T-cell (primary cell): ENCODE measurements at regions of chr1 and their contacts with region 1.

Region 1: GRCh38 chr1:29202584-29203340 is 21.1 kb upstream of the SRSF4 start:
- DNase-seq: peak; percentile 55 to 91 (median 81)
- ATAC-seq: peak; percentile 88 to 93 (median 93)
- H3K4me3 ChIP-seq: no peak overlapping the region
- H3K4me3 Mint-ChIP-seq: no peak overlapping the region
- H3K27ac ChIP-seq: no peak overlapping the region
- H3K27ac Mint-ChIP-seq: no peak overlapping the region
- H3K4me1 ChIP-seq: no peaks in the 10 kb centered on the region
- H3K4me1 Mint-ChIP-seq: peaks cover 0 to 3% (median 0%) of the 10 kb centered on the region in 3 donors
- H3K27me3 ChIP-seq: no peaks in the 10 kb centered on the region
- H3K27me3 Mint-ChIP-seq: no peaks in the 10 kb centered on the region

Region 2: DNA sequence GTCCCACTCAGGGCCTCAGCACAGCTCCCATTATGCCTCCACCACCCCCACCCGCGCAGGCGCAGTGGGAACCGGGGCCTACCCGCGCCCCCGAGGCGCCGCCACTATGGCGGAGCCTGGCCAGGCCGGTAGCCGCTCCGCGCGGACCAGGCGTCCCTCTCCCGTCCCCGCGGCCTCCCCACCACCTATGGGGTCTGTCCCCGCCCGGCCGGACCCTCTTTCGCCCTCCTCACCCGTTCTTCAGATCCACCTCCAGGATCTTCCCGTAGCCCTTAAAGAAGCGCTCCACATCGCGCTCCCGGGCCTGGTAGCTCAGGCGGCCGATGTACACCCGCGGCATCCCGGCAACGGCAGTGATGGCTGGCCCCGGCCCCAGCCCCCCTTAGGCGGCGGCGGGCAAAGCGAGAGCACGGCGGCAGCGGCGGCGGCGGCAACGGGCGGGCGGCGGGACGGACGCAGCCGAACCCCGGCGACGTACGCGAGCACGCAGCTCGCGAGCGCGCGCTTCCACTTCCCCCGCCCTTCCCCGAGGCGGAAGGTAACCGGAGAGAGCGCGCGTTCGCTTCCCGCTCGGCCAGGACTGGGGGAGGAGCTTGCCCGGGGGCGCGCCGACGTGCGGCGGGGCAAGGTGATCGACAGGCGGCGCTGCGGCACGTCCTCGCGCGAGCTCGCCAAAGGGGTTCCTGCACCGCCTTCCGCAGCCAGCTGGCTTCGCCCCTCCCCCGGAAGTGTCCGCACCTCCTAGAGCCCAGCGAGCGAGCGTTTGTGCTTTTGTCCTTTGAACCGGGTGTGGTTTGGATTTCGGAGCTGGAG is 21.1 kb before region 1 on chr1 and contains the start of gene SRSF4:
- CTCF ChIA-PET with region 1: interaction called, 3 to 35 read pairs
- POLR2A ChIA-PET with region 1: interaction called in 1 of 2 experiments, 4 read pairs
- DNase-seq: peak; percentile 96 to 99 (median 98)
- ATAC-seq: peak; percentile 89 to 97 (median 92)
- H3K4me3 ChIP-seq: peak within 1 kb of the TSS; percentile 89 to 98
- H3K4me3 Mint-ChIP-seq: peak within 1 kb of the TSS; percentile 89 to 95 (median 92)
- H3K27ac ChIP-seq: peak within 1 kb of the TSS; percentile 99
- H3K27ac Mint-ChIP-seq: peak within 1 kb of the TSS; percentile 92 to 96
- H3K4me1 ChIP-seq: peaks cover 30 to 33% of the 10 kb centered on the region in 2 experiments
- H3K4me1 Mint-ChIP-seq: peaks cover 51 to 57% (median 51%) of the 10 kb centered on the region in 3 donors
- H3K27me3 ChIP-seq: no peaks in the 10 kb centered on the region
- H3K27me3 Mint-ChIP-seq: no peaks in the 10 kb centered on the region
- total RNA-seq, gene SRSF4: 76.0 to 90.4 (median 78.9) TPM

Region 3: DNA sequence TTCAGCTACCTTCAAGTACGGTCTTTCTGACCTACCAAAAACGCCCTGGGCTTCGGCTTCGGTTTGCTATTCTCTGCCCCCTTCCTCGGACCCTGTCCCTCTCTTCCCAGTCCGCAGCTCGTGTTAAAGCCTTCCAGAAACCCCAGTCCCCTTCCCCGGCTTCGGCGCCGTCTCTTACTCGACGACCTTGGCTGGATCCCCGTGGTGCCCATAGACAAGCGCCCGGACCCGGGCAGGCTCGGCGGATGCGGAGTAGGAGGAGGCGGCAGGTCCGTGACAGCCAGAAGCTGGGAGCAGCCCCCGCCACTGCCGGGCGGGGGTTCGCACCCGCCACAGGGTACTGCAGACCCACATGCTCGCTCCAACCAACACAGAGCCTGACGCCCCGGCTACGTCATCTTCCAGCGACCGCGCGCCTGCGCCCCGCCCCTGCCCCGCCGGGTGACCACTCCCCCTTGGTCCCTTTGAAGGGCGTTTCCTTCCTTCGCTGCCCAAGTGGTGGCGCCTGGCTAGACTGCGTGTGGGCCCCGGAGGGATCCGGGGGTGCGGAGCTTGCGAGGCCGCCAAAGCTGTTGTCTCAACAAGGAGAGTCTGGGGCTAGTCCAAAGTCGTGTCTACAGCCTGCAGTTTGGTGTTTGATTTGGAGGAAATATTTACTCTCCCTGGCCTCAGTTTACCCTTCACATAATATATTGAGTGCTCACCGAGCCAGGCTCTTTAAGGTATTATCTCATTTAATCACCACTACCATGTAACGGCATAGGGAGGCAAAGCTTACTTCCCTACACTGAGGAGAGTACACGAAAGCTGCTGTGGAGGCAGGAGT is 28.0 kb after region 1 on chr1 and contains the start of gene MECR:
- CTCF ChIA-PET with region 1: no interaction called
- POLR2A ChIA-PET with region 1: no interaction called
- DNase-seq: peak; percentile 84 to 96 (median 91)
- ATAC-seq: peak; percentile 95 to 98 (median 98)
- H3K4me3 ChIP-seq: peak within 1 kb of the TSS; percentile 77 to 80
- H3K4me3 Mint-ChIP-seq: peak within 1 kb of the TSS; percentile 90 to 99 (median 92)
- H3K27ac ChIP-seq: peak within 1 kb of the TSS; percentile 32
- H3K27ac Mint-ChIP-seq: peak within 1 kb of the TSS; percentile 89 to 93
- H3K4me1 ChIP-seq: peaks cover 5 to 8% of the 10 kb centered on the region in 2 experiments
- H3K4me1 Mint-ChIP-seq: peaks cover 21 to 22% (median 22%) of the 10 kb centered on the region in 3 donors
- H3K27me3 ChIP-seq: peaks cover 0 to 6% of the 10 kb centered on the region in 2 experiments
- H3K27me3 Mint-ChIP-seq: peaks cover 10 to 15% of the 10 kb centered on the region in 2 donors
- total RNA-seq, gene MECR: 9.5 to 17.8 (median 17.3) TPM

Region 4: DNA sequence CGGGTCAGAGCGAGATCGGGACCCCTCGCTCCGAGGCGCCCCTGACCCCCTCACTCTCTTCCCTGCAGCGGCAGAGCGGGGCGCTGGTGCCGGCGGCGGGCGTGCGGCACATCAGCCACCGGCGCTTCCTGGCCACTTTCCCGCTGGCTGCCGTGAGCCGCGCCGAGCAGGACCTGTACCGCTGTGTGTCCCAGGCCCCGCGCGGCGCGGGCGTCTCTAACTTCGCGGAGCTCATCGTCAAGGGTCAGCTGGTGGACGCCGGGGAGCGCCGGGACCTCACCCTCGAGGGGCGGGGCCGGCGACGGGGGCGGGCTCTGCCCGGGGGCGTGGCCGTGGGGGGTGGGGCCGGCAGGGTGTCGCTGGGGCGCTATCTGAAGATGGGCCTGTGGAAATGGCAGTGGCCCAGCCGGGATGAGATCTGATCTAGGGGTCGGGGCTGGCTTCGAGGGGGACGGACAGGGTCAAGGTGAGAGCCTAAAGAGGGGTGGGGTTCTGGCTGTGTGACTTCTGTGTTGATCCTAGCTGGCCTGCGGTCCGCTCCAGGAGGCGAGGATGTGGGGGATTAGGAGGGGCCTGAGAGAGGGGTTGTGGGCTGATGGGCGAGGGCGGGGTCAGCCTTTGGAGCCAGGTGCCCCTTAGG is 57.2 kb after region 1 on chr1:
- CTCF ChIA-PET with region 1: no interaction called
- POLR2A ChIA-PET with region 1: no interaction called
- DNase-seq: peak in 12 of 35 experiments; percentile 8 to 45 (median 20)
- ATAC-seq: peak; percentile 65 to 73 (median 70)
- H3K4me3 ChIP-seq: peak overlapping the region; percentile 32 to 52
- H3K4me3 Mint-ChIP-seq: peak overlapping the region; percentile 71 to 79 (median 73)
- H3K27ac ChIP-seq: no peak overlapping the region
- H3K27ac Mint-ChIP-seq: no peak overlapping the region
- H3K4me1 ChIP-seq: peaks cover 0 to 16% of the 10 kb centered on the region in 2 experiments
- H3K4me1 Mint-ChIP-seq: peaks cover 5 to 11% (median 6%) of the 10 kb centered on the region in 3 donors
- H3K27me3 ChIP-seq: peaks cover 3 to 59% of the 10 kb centered on the region in 2 experiments
- H3K27me3 Mint-ChIP-seq: peaks cover 32 to 53% of the 10 kb centered on the region in 2 donors

Region 5: DNA sequence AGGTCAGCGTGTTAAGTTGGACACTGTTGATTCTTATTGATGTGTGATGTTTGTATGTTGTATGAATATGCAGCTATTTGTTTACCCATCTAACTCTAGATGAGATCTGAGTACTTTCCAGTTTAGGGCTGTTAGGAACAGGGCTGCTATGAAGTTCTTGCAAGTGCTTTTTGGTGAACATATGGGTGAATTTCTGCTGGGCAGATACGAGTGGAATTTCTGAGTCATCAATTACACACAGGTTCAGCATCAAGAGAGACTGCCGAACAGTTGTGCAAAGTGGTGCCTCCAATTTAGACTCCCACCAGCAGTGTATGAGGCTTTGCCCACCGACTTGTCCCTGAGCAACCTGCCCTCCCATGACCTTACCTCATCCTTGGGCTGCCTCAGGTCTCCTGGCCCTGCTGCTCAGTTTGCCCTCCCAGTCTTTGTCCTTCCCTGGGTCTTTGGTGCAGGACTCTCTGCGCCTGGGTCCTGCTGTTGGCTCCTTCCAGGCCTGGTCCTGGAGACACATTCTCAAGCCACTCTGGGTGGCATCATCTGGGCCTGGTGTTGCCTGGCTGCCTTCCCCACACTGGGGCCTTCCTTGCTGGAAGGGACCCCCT is 377.2 kb after region 1 on chr1:
- CTCF ChIA-PET with region 1: no interaction called
- POLR2A ChIA-PET with region 1: no interaction called
- DNase-seq: no peak
- ATAC-seq: no peak
- H3K4me3 ChIP-seq: no peak overlapping the region
- H3K4me3 Mint-ChIP-seq: no peak overlapping the region
- H3K27ac ChIP-seq: no peak overlapping the region
- H3K27ac Mint-ChIP-seq: no peak overlapping the region
- H3K4me1 ChIP-seq: no peaks in the 10 kb centered on the region
- H3K4me1 Mint-ChIP-seq: no peaks in the 10 kb centered on the region
- H3K27me3 ChIP-seq: peaks cover 0 to 14% of the 10 kb centered on the region in 2 experiments
- H3K27me3 Mint-ChIP-seq: peaks cover 8 to 13% of the 10 kb centered on the region in 2 donors